Naive thymus-derived CD4-positive, alpha-beta T cell (primary cell): ENCODE measurements at regions of chr6 and their contacts with region 1.

Region 1: GRCh38 chr6:27753668-27754407 is 158.4 kb downstream of the OR2B2 start:
- DNase-seq: peak in 8 of 9 donors; percentile 38 to 69 (median 45)
- ATAC-seq: peak; percentile 22
- H3K4me3 ChIP-seq: peak overlapping the region; percentile 80
- H3K4me3 Mint-ChIP-seq: peak overlapping the region; percentile 81 to 99 (median 94)
- H3K27ac ChIP-seq: peak overlapping the region; percentile 96
- H3K27ac Mint-ChIP-seq: peak overlapping the region; percentile 84 to 100 (median 97)
- H3K4me1 ChIP-seq: peaks cover 6 to 20% of the 10 kb centered on the region in 2 donors
- H3K4me1 Mint-ChIP-seq: peaks cover 17 to 53% (median 39%) of the 10 kb centered on the region in 7 donors
- H3K27me3 ChIP-seq: no peaks in the 10 kb centered on the region
- H3K27me3 Mint-ChIP-seq: peaks cover 0 to 8% (median 0%) of the 10 kb centered on the region in 5 donors

Region 2: DNA sequence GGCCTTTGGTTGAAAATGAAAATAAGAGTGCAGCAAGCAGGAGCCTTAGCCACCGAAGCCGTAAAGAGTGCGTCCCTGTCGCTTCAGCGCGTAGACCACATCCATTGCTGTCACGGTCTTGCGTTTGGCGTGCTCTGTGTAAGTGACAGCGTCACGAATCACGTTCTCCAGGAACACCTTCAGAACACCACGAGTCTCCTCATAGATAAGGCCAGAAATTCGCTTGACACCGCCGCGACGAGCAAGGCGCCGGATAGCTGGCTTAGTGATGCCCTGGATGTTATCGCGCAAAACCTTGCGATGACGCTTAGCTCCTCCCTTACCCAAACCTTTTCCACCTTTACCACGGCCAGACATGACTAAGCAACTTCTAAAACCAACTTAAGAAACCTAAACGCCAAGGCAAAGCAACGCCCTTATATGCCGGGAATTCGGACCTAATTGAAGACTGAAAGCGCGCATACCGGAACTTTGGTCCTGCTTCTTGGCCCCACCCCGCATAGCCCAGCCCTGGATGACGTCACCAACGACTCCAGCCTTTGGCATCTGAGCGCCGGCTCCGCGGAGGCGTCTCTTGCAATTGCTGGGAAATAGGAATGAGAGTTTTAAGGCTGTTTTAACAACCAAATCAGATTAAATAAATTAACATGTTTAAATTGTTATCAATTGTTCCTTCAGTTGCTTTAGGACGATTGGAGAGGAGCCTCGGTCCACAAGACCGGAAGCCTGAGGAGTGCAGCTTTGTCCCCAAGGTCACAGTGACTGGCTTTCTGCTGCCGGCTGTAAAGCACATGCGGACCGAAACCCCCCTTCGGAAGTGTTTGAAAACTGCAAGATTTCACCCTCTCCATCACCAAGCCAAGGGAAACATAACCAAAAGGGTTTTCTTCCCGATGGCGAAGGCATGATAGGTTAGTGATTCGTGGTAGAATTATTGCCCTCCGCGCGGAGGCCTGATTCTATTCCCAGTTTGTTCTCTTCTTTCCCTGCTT is 1468.4 kb before region 1 on chr6:
- CTCF ChIA-PET with region 1: no interaction called
- POLR2A ChIA-PET with region 1: no interaction called
- intact Hi-C with region 1: loop called in 1 of 2 experiments (anchors 10 kb)
- DNase-seq: peak; percentile 72 to 97 (median 92)
- ATAC-seq: peak; percentile 91
- H3K4me3 ChIP-seq: peak overlapping the region; percentile 88
- H3K4me3 Mint-ChIP-seq: peak overlapping the region; percentile 86 to 96 (median 90)
- H3K27ac ChIP-seq: peak overlapping the region; percentile 91
- H3K27ac Mint-ChIP-seq: peak overlapping the region; percentile 91 to 100 (median 98)
- H3K4me1 ChIP-seq: peaks cover 0 to 8% of the 10 kb centered on the region in 2 donors
- H3K4me1 Mint-ChIP-seq: peaks cover 7 to 48% (median 33%) of the 10 kb centered on the region in 7 donors
- H3K27me3 ChIP-seq: no peaks in the 10 kb centered on the region
- H3K27me3 Mint-ChIP-seq: peaks cover 0 to 9% (median 5%) of the 10 kb centered on the region in 5 donors

Region 3: DNA sequence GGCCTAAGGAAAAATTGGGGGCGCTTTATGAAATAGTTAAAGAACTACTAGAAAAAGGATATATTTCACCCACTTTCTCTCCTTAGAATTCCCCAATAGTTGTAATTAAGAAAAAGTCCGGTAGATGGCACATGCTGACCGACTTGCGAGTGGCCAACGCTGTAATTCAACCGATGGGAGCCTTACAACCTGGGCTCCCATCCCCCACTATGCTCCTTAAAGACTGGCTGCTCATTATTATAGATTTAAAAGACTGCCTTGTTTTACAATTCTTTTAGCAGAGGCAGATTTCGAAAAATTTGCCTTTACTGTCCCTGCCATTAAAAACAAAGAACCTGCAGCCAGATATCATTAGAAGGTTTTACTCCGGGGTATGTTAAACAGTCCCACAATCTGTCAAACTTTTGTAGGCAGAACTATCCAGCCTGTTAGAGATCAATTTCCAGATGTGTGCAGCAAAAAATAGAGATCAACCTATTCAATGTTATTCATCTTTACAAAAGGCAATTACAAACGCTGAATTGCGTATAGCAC is 564.9 kb before region 1 on chr6:
- CTCF ChIA-PET with region 1: interaction called, 3 read pairs
- POLR2A ChIA-PET with region 1: interaction called, 4 read pairs
- intact Hi-C with region 1: loop called (anchors 1 kb)
- DNase-seq: peak in 8 of 9 donors; percentile 44 to 69 (median 65)
- ATAC-seq: peak; percentile 90
- H3K4me3 ChIP-seq: peak overlapping the region; percentile 81
- H3K4me3 Mint-ChIP-seq: peak overlapping the region; percentile 82 to 99 (median 93)
- H3K27ac ChIP-seq: peak overlapping the region; percentile 58
- H3K27ac Mint-ChIP-seq: peak overlapping the region in 8 of 9 donors; percentile 44 to 79 (median 64)
- H3K4me1 ChIP-seq: peaks cover 3% of the 10 kb centered on the region in 2 donors
- H3K4me1 Mint-ChIP-seq: peaks cover 9 to 20% (median 15%) of the 10 kb centered on the region in 7 donors
- H3K27me3 ChIP-seq: no peaks in the 10 kb centered on the region
- H3K27me3 Mint-ChIP-seq: peaks cover 0 to 3% (median 0%) of the 10 kb centered on the region in 5 donors

Region 4: GRCh38 chr6:27503436-27504030 is 250.3 kb before region 1 on chr6:
- CTCF ChIA-PET with region 1: interaction called, 4 read pairs
- POLR2A ChIA-PET with region 1: interaction called, 4 read pairs
- intact Hi-C with region 1: loop called (anchors 1 kb)
- DNase-seq: peak; percentile 73 to 86 (median 80)
- ATAC-seq: peak; percentile 75
- H3K4me3 ChIP-seq: peak overlapping the region; percentile 61
- H3K4me3 Mint-ChIP-seq: peak overlapping the region; percentile 85 to 99 (median 91)
- H3K27ac ChIP-seq: peak overlapping the region; percentile 57
- H3K27ac Mint-ChIP-seq: peak overlapping the region; percentile 82 to 97 (median 91)
- H3K4me1 ChIP-seq: peaks cover 6% of the 10 kb centered on the region in 2 donors
- H3K4me1 Mint-ChIP-seq: peaks cover 15 to 41% (median 36%) of the 10 kb centered on the region in 7 donors
- H3K27me3 ChIP-seq: no peaks in the 10 kb centered on the region
- H3K27me3 Mint-ChIP-seq: peaks cover 5 to 62% (median 11%) of the 10 kb centered on the region in 5 donors

Region 5: GRCh38 chr6:27772261-27773001 is 18.6 kb after region 1 on chr6:
- CTCF ChIA-PET with region 1: interaction called, 11 read pairs
- POLR2A ChIA-PET with region 1: interaction called, 5 read pairs
- intact Hi-C with region 1: loop called (anchors 1 kb)
- DNase-seq: peak; percentile 72 to 88 (median 82)
- ATAC-seq: peak; percentile 98
- H3K4me3 ChIP-seq: no peak overlapping the region
- H3K4me3 Mint-ChIP-seq: peak overlapping the region in 6 of 10 donors; percentile 14 to 59 (median 34)
- H3K27ac ChIP-seq: no peak overlapping the region
- H3K27ac Mint-ChIP-seq: peak overlapping the region in 2 of 9 donors; percentile 7 to 8
- H3K4me1 ChIP-seq: peaks cover 3 to 5% of the 10 kb centered on the region in 2 donors
- H3K4me1 Mint-ChIP-seq: peaks cover 6 to 20% (median 7%) of the 10 kb centered on the region in 7 donors
- H3K27me3 ChIP-seq: no peaks in the 10 kb centered on the region
- H3K27me3 Mint-ChIP-seq: peaks cover 1 to 35% (median 10%) of the 10 kb centered on the region in 5 donors

Region 6: GRCh38 chr6:27902335-27903314 is 148.8 kb after region 1 on chr6:
- CTCF ChIA-PET with region 1: interaction called, 5 read pairs
- POLR2A ChIA-PET with region 1: interaction called, 4 read pairs
- intact Hi-C with region 1: loop called in 1 of 2 experiments (anchors 1 kb)
- DNase-seq: peak; percentile 75 to 94 (median 90)
- ATAC-seq: peak; percentile 92
- H3K4me3 ChIP-seq: peak overlapping the region; percentile 95
- H3K4me3 Mint-ChIP-seq: peak overlapping the region; percentile 75 to 97 (median 91)
- H3K27ac ChIP-seq: peak overlapping the region; percentile 82
- H3K27ac Mint-ChIP-seq: peak overlapping the region; percentile 95 to 99 (median 99)
- H3K4me1 ChIP-seq: peaks cover 0 to 3% of the 10 kb centered on the region in 2 donors
- H3K4me1 Mint-ChIP-seq: peaks cover 0 to 26% (median 15%) of the 10 kb centered on the region in 7 donors
- H3K27me3 ChIP-seq: no peaks in the 10 kb centered on the region
- H3K27me3 Mint-ChIP-seq: peaks cover 4 to 35% (median 13%) of the 10 kb centered on the region in 5 donors

Region 7: DNA sequence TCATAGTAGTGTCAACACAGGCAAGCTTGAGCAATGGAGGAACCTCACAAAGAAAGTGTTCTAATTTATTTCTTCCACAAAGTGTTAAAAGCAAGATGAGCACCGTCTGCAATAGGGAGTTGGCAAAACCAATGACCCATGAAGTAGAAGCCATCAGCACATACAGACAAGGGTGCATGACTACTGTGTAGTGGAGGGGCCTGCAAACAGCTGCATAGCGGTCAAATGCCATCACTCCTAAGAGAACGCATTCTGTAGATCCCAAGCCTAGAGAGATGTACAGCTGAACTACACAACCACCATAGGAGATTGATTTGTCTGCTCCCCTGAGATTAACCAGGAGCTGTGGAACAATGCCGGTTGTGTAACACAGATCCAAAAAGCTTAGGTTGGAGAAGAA is 299.7 kb after region 1 on chr6:
- CTCF ChIA-PET with region 1: no interaction called
- POLR2A ChIA-PET with region 1: no interaction called
- intact Hi-C with region 1: no loop called
- DNase-seq: no peak
- ATAC-seq: no peak
- H3K4me3 ChIP-seq: no peak overlapping the region
- H3K4me3 Mint-ChIP-seq: no peak overlapping the region
- H3K27ac ChIP-seq: no peak overlapping the region
- H3K27ac Mint-ChIP-seq: no peak overlapping the region
- H3K4me1 ChIP-seq: no peaks in the 10 kb centered on the region
- H3K4me1 Mint-ChIP-seq: no peaks in the 10 kb centered on the region
- H3K27me3 ChIP-seq: peaks cover 0 to 4% of the 10 kb centered on the region in 2 donors
- H3K27me3 Mint-ChIP-seq: peaks cover 19 to 70% (median 40%) of the 10 kb centered on the region in 5 donors

Region 8: DNA sequence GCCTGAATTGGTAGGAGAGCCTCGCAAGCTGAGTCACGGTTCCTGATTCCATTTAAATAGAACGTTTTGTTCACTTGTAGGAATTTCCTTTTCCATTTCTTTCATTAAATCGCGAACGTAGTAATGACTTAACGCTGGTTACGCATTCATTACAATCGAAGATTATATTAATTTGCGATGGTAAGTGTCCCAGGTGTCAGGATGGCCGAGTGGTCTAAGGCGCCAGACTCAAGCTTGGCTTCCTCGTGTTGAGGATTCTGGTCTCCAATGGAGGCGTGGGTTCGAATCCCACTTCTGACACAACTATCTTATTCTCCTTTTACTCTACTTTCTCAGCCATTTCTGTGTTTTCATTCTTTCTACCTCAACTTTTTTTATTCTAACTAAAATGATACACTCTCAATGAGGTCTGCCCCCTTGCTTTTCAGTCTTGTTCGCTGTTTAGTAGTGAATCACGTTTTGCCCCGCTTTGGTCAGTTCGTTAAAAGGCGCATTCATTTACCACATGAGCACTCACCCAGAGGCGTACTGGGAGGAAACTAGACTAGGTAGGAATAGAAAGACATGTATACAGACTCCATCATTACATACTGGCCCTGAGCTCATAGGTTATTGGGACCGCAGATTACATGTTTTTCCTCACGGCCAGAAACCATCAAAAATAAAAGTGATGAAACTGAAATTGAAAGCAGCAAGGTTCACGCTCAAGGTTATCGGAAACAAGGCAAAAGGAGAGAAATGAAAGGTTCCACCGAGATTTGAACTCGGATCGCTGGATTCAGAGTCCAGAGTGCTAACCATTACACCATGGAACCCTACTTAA is 1187.2 kb after region 1 on chr6:
- CTCF ChIA-PET with region 1: no interaction called
- POLR2A ChIA-PET with region 1: no interaction called
- intact Hi-C with region 1: loop called in 1 of 2 experiments (anchors 1 kb)
- DNase-seq: peak; percentile 35 to 90 (median 83)
- ATAC-seq: peak; percentile 76
- H3K4me3 ChIP-seq: peak overlapping the region; percentile 82
- H3K4me3 Mint-ChIP-seq: peak overlapping the region; percentile 86 to 99 (median 92)
- H3K27ac ChIP-seq: peak overlapping the region; percentile 60
- H3K27ac Mint-ChIP-seq: peak overlapping the region; percentile 90 to 99 (median 94)
- H3K4me1 ChIP-seq: peaks cover 22 to 30% of the 10 kb centered on the region in 2 donors
- H3K4me1 Mint-ChIP-seq: peaks cover 34 to 64% (median 56%) of the 10 kb centered on the region in 7 donors
- H3K27me3 ChIP-seq: no peaks in the 10 kb centered on the region
- H3K27me3 Mint-ChIP-seq: peaks cover 0 to 6% (median 0%) of the 10 kb centered on the region in 5 donors